ENCODE measurements at regions of chr6 and their contacts with region 1.

Region 1: DNA sequence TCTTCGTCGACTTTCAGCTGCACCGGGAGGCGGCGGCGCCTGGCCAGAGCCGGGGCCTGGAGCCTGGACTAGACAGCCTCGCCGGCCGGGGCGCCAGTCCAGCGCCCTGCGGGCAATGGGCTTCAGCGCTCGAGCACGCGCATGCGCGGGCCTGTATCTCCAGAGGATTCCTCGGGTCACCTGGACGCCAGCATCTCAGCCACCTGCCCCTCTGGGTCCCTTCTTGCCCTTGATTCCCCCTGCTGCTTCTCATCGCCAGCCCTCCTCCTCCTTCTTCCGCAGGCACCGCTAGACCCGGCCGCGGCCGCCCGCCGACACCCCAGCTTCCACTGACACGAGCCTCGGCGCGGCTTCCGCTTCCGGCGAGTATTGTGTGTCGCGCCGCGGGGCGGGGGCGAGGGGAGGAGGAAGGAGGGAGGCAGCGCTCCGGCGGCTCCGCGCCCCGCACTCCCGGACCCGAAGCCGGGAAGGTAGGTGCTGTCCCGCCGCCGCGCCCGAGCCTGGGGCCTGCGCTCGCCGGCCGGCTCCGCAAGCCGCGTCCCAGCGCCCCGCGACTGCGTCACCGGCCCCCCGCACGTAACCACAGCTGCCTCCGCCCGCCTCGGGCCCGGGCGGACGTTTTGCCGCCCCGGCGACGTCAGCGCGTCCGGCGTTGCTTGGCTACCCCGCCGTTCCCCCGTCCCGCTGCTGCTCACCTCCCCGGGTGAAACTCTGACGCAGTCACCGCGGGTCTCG is at the start of gene TRIM39:
- DNase-seq: peak; percentile 85 to 94 (median 93)
- H3K4me3 ChIP-seq: peak within 1 kb of the TSS; percentile 97
- H3K4me3 Mint-ChIP-seq: peak within 1 kb of the TSS; percentile 88 to 99 (median 97)
- H3K27ac ChIP-seq: peak within 1 kb of the TSS; percentile 98
- H3K27ac Mint-ChIP-seq: peak within 1 kb of the TSS; percentile 99 to 100 (median 100)
- H3K4me1 ChIP-seq: peaks cover 46% of the 10 kb centered on the region
- H3K4me1 Mint-ChIP-seq: peaks cover 58 to 66% (median 61%) of the 10 kb centered on the region in 3 donors
- H3K27me3 ChIP-seq: no peaks in the 10 kb centered on the region
- H3K27me3 Mint-ChIP-seq: peaks cover 0 to 11% of the 10 kb centered on the region in 2 donors
- total RNA-seq, gene TRIM39: 19.9 to 21.9 TPM

Region 2: DNA sequence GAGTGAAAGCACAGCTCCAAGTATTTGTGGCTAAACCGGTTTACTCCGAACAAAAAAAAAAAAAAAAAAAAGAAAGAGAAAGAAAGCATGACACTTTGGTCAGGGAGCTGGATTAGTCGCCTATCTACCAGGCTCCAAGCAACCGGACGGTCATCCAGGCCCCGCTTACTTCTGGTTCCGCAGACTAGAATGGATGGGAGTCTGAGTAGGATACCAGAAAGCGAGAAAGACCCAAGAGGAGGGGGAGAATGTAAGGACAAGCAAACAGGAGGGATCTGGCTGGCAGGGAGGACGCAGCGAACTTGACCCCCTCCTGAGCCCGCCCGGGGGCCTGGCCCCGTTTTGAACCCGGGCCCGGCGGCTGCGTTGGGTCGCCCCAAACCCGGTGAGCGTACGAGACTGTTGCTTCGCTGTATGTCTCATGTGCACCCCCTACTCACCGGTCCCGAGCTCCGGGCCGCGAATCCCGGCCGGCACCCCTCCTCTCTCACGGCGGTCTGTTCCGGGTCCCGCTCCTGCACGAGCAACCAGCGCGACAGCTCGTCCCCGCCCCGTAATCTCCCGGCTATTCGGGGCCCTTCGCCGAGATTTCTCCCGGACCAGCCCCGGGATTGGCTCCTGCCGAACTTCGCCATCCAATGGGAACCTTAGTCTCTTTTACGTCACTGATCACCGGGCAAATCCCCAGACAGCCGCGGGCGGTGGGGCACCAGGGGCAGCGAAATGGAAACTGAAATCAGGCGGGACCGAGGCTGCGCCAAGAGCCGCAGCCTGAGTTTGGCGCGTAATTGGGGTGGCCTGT is 113.6 kb before region 1 on chr6 and contains the start of gene TRIM26:
- CTCF ChIA-PET with region 1: interaction called, 8 read pairs
- POLR2A ChIA-PET with region 1: interaction called, 24 read pairs
- DNase-seq: peak; percentile 93 to 98 (median 98)
- H3K4me3 ChIP-seq: peak within 1 kb of the TSS; percentile 78
- H3K4me3 Mint-ChIP-seq: peak within 1 kb of the TSS; percentile 87 to 98 (median 94)
- H3K27ac ChIP-seq: peak within 1 kb of the TSS; percentile 97
- H3K27ac Mint-ChIP-seq: peak within 1 kb of the TSS; percentile 96 to 100 (median 100)
- H3K4me1 ChIP-seq: peaks cover 44% of the 10 kb centered on the region
- H3K4me1 Mint-ChIP-seq: peaks cover 54 to 64% (median 60%) of the 10 kb centered on the region in 3 donors
- H3K27me3 ChIP-seq: no peaks in the 10 kb centered on the region
- H3K27me3 Mint-ChIP-seq: no peaks in the 10 kb centered on the region
- total RNA-seq, gene TRIM26: 94.6 to 102 TPM

Region 3: DNA sequence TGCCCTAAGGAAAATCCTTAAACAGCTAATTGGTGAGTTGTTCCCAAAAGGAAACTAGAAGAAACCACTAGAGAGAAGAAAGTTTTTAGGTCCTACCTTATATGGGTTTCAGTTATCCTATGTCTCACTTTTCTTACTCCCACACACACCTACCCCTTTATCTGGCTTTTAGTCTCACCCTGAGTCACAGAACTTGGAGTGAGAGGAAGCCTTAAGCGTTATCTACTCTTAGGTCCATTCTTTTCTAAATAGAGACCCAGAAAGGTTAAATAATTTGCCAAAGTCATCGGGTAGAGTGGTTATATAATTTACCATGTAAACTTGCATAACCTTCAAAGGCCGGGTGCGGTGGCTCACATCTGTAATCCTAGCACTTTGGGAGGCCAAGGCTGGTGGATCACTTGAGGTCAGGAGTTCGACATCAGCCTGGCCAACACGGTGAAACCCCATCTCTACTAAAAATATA is 13.9 kb after region 1 on chr6:
- CTCF ChIA-PET with region 1: interaction called, 11 read pairs
- POLR2A ChIA-PET with region 1: interaction called, 5 read pairs
- DNase-seq: no peak
- H3K4me3 ChIP-seq: no peak overlapping the region
- H3K4me3 Mint-ChIP-seq: no peak overlapping the region
- H3K27ac ChIP-seq: peak overlapping the region; percentile 1
- H3K27ac Mint-ChIP-seq: no peak overlapping the region
- H3K4me1 ChIP-seq: peaks cover 6% of the 10 kb centered on the region
- H3K4me1 Mint-ChIP-seq: peaks cover 1 to 9% (median 5%) of the 10 kb centered on the region in 3 donors
- H3K27me3 ChIP-seq: no peaks in the 10 kb centered on the region
- H3K27me3 Mint-ChIP-seq: peaks cover 0 to 2% of the 10 kb centered on the region in 2 donors